ENCODE measurements at regions of chr19 and their contacts with region 1.

Region 1: DNA sequence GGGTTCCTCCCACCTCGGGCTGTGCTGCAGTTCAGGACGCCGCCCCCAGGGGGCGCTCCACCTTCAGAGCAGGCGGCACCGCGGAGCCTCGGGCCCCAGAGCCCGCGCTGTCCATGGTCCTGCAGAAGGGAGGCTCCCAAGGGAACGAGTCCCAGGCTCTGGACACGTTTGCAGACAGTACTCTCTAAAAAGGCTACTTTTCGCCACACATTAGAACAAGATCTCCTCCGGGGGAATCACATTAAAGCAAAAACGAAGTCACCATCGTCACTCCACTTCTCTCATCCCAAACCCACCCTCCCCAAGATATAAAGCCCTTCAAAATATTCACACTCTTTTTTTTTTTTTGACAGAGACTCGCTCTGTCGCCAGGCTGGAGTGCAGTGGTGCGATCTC is 4.6 kb upstream of the SIGLEC10 start:
- DNase-seq: peak; percentile 89
- CTCF ChIP-seq: peak; percentile 99

Region 2: GRCh38 chr19:51367565-51368365 is 54.3 kb before region 1 on chr19:
- CTCF ChIA-PET with region 1: interaction called, 9 read pairs
- POLR2A ChIA-PET with region 1: interaction called, 11 read pairs
- DNase-seq: peak; percentile 99
- CTCF ChIP-seq: no peak

Region 3: GRCh38 chr19:51407511-51408131 is 14.4 kb before region 1 on chr19:
- CTCF ChIA-PET with region 1: interaction called, 168 read pairs
- POLR2A ChIA-PET with region 1: interaction called, 3 read pairs
- DNase-seq: peak; percentile 56
- CTCF ChIP-seq: peak; percentile 32

Region 4: DNA sequence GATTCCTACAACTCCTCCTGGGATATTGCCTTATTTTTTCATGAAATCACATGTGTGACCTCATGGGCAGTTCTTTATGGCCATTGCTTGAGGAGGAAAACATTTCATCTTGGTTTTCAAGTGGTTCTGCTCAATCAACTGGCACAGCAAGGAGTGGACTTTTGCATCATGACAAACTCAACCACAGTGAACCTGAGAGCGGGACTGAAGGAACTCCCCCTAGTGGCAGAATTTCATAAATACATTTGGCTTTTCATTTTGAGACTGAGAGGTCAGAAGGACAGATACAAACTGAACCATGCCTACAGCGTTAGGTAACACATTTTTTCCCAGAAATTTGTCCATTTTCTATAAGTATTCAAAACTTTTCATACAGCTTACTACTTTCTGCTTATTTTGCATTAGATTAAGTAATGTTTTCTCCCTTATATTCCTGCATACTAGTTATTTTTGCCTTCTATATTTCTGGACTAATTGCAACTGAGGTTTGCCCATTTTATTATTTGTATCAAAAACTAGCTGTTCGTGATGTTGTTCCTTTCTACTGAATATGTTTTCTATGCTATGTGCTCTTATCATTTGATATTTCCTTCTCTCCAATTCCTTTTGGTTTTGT is 92.9 kb after region 1 on chr19:
- CTCF ChIA-PET with region 1: interaction called, 11 read pairs
- POLR2A ChIA-PET with region 1: no interaction called
- DNase-seq: peak; percentile 63
- CTCF ChIP-seq: peak; percentile 67

Region 5: DNA sequence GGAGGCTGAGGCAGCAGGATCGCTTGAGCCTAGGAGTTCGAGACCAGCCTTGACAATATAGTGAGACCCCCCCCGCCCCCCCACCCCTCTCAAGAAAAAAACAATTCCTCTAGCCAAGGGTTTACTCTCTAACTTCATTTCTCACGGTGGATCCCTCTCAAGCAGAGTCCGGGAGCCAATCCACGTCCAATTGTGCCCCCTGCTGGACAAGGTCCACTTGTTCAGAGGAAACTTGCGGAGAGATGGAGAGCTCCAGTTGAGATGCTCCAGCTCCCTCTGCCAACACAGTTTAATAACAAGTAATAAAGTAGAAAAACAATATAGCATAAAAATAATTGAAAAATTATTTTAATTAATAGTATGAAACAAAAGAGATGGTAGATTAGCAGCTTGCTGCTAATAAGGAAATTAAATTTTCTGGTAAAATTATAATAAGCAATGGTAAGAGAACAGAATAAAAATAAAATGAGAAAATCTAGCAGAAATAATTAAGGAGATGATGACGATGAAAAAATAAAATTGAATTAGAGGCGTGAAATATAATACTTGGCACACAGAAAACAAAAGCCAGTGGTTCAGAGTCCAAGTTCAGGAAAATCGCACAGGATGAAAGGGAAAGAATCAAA is 239.0 kb after region 1 on chr19:
- CTCF ChIA-PET with region 1: interaction called, 23 read pairs
- POLR2A ChIA-PET with region 1: no interaction called
- DNase-seq: peak; percentile 58
- CTCF ChIP-seq: peak; percentile 82